ENCODE measurements at regions of chr4 and their contacts with region 1.

Region 1: GRCh38 chr4:10006231-10006600 is 15.1 kb downstream of the SLC2A9 start:
- DNase-seq: peak; percentile 46 to 81
- ATAC-seq: peak; percentile 89

Region 2: DNA sequence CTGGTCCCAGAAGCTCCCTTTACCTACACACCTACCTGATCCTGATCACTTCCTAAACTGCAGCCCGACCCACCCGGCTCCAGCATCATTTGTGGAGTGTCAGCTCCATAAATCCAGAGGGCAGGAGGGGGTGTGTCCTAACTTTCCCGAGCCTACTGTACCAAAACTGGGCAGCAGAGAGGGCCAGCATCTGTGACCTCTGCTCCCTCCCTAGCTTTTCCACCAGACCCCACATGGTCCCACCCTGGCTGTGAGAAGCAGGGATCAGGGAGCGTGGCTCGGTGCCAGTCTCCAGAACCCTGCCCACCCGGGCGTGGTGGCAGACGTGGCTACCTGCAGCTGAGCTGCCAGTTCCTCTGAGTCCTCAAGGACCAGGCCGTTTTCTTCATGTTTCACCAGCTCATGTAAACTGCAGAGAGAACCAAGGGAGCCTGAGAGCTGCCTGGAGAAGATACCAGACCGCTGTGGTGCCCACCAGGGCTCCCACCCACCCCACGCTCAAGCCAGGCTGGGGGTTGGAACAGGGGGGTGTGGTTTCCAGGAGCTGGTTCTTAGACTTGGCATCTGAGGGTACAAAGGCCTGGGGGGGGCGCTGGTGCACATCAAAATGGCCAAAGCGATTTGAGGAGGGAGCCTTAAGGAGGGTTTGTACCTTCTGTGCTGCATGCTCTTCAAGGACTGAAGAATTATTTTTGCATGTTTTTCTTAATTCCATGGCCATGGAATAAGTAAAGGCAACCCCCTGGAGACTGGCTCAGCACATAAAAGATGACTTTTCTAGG is 301.5 kb before region 1 on chr4:
- intact Hi-C with region 1: loop called in 1 of 2 experiments (anchors 10 kb)
- DNase-seq: peak in 1 of 2 donors; percentile 49
- ATAC-seq: no peak

Measured in left colon (tissue), 2 donors.